Endothelial cell of umbilical vein (primary cell): ENCODE measurements at regions of chr3 and their contacts with region 1.

Region 1: GRCh38 chr3:186783073-186783730 is at the start of gene EIF4A2:
- DNase-seq: peak; percentile 86
- H3K4me3 ChIP-seq: peak within 1 kb of the TSS; percentile 38 to 85 (median 72)
- H3K27ac ChIP-seq: peak within 1 kb of the TSS; percentile 93
- H3K4me1 ChIP-seq: peaks cover 26% of the 10 kb centered on the region
- H3K27me3 ChIP-seq: no peaks in the 10 kb centered on the region
- CTCF ChIP-seq: no peak
- POLR2A ChIP-seq: peak; percentile 99
- total RNA-seq, gene EIF4A2: 260 and 282 TPM in 2 replicates

Region 2: DNA sequence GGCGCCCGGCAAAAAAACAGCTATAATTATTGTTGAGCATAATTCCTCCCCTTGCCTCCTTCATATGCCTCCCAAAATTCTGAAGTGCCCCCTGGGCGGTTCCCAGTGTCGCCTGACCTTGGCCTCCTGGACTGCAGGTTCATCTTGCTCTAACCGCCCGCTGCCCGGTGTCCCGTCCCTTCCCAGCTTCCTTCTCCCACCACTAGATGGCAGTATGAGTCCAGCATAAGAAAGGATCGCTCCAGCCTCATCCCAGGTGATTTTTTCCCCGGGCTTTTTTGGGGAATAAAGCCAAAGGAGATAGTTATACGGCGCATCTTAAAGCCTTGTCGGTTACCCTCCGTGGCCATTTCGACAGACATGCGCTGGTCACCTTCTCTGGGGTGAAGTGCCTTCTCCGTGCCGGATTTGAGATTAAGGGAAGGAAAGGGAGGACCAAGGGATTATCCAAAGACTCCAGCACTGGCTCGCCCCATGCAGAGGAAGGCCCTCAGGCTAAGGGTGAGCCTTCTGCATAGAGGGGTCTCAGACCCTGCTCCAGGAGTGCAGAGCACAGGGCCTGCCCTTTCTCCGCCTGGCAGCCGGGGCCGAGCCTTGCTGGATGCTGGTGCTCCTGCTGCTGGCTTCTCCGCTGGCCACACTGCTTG is 799.6 kb before region 1 on chr3:
- CTCF ChIA-PET with region 1: no interaction called
- POLR2A ChIA-PET with region 1: no interaction called
- dilution Hi-C with region 1: no loop called
- intact Hi-C with region 1: loop called (anchors 10 kb)
- DNase-seq: peak; percentile 55
- H3K4me3 ChIP-seq: no peak overlapping the region
- H3K27ac ChIP-seq: no peak overlapping the region
- H3K4me1 ChIP-seq: peaks cover 6% of the 10 kb centered on the region
- H3K27me3 ChIP-seq: no peaks in the 10 kb centered on the region
- CTCF ChIP-seq: peak; percentile 77 to 88
- POLR2A ChIP-seq: no peak

Region 3: DNA sequence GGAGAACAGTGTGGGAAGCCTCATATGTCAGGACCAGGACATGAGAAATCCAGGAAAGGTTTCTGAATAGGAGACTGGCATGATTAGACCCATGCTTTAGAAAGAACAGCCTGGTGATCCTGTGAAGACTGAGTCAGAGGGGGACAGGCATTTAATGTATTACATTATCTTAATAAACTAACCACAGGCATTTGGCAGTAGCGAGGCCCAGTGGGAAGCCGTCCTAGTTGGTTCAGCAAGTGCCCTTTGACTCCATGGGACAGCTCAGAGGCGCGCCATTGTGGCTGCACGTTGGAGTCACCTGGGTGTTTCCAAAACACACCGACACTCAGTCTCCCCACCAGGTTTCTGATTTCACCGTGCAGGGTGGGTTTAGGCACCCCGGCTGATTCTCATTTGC is 330.7 kb before region 1 on chr3:
- CTCF ChIA-PET with region 1: no interaction called
- POLR2A ChIA-PET with region 1: no interaction called
- dilution Hi-C with region 1: no loop called
- intact Hi-C with region 1: no loop called
- DNase-seq: no peak
- H3K4me3 ChIP-seq: no peak overlapping the region
- H3K27ac ChIP-seq: no peak overlapping the region
- H3K4me1 ChIP-seq: no peaks in the 10 kb centered on the region
- H3K27me3 ChIP-seq: no peaks in the 10 kb centered on the region
- CTCF ChIP-seq: no peak
- POLR2A ChIP-seq: no peak

Region 4: GRCh38 chr3:186772701-186773424 is 10.3 kb before region 1 on chr3:
- CTCF ChIA-PET with region 1: interaction called, 3 read pairs
- POLR2A ChIA-PET with region 1: interaction called, 29 read pairs
- dilution Hi-C with region 1: no loop called
- intact Hi-C with region 1: loop called (anchors 1 kb)
- DNase-seq: peak; percentile 39
- H3K4me3 ChIP-seq: peak overlapping the region; percentile 30 to 53 (median 34)
- H3K27ac ChIP-seq: no peak overlapping the region
- H3K4me1 ChIP-seq: peaks cover 6% of the 10 kb centered on the region
- H3K27me3 ChIP-seq: no peaks in the 10 kb centered on the region
- CTCF ChIP-seq: no peak
- POLR2A ChIP-seq: no peak

Region 5: GRCh38 chr3:186806089-186807055 is 23.2 kb after region 1 on chr3 and contains the start of gene RFC4:
- CTCF ChIA-PET with region 1: no interaction called
- POLR2A ChIA-PET with region 1: no interaction called
- dilution Hi-C with region 1: no loop called
- intact Hi-C with region 1: loop called (anchors 1 kb)
- DNase-seq: peak; percentile 75
- H3K4me3 ChIP-seq: peak within 1 kb of the TSS; percentile 29 to 85 (median 63)
- H3K27ac ChIP-seq: peak within 1 kb of the TSS; percentile 42
- H3K4me1 ChIP-seq: peaks cover 12% of the 10 kb centered on the region
- H3K27me3 ChIP-seq: no peaks in the 10 kb centered on the region
- CTCF ChIP-seq: no peak
- POLR2A ChIP-seq: peak; percentile 85
- total RNA-seq, gene RFC4: 29.1 and 33.7 TPM in 2 replicates

Region 6: DNA sequence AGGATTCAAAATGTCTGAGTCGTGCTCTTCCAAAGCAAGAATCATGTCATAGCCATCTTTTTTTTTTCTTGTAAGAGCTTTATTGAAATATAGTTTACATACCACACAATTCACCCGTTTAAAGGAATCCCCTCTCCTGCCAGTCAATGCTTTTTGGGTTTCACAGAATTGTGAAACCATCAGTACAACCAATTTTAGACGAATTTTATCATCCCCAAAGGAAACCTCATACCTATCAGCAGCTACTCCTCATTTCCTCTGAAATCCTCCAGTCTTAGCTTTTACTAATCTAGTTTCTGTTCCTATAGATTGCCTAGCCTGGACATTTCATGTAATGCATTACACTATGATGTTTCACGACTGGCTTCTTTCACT is 98.9 kb after region 1 on chr3:
- CTCF ChIA-PET with region 1: no interaction called
- POLR2A ChIA-PET with region 1: no interaction called
- dilution Hi-C with region 1: no loop called
- intact Hi-C with region 1: no loop called
- DNase-seq: no peak
- H3K4me3 ChIP-seq: no peak overlapping the region
- H3K27ac ChIP-seq: peak overlapping the region; percentile 71
- H3K4me1 ChIP-seq: peaks cover 16% of the 10 kb centered on the region
- H3K27me3 ChIP-seq: no peaks in the 10 kb centered on the region
- CTCF ChIP-seq: no peak
- POLR2A ChIP-seq: no peak

Region 7: GRCh38 chr3:187208159-187208558 is 425.0 kb after region 1 on chr3:
- CTCF ChIA-PET with region 1: no interaction called
- POLR2A ChIA-PET with region 1: no interaction called
- dilution Hi-C with region 1: no loop called
- intact Hi-C with region 1: no loop called
- DNase-seq: peak; percentile 7
- H3K4me3 ChIP-seq: no peak overlapping the region
- H3K27ac ChIP-seq: no peak overlapping the region
- H3K4me1 ChIP-seq: no peaks in the 10 kb centered on the region
- H3K27me3 ChIP-seq: peaks cover 1 to 2% of the 10 kb centered on the region in 2 experiments
- CTCF ChIP-seq: no peak
- POLR2A ChIP-seq: no peak